ENCODE measurements at regions of chr2 and their contacts with region 1.

Region 1: GRCh38 chr2:99154643-99155536 is at the starts of genes LIPT1 and TSGA10:
- DNase-seq: peak; percentile 94 to 95
- ATAC-seq: peak; percentile 99 to 100 (median 100)
- H3K4me3 ChIP-seq: peak within 1 kb of the TSS; percentile 76
- H3K27ac ChIP-seq: peak within 1 kb of the TSS; percentile 92
- H3K4me1 ChIP-seq: peaks cover 15% of the 10 kb centered on the region
- H3K27me3 ChIP-seq: no peaks in the 10 kb centered on the region
- CTCF ChIP-seq: no peak
- total RNA-seq, gene LIPT1: 6.7 to 8.9 (median 7.7) TPM
- total RNA-seq, gene TSGA10: 1.5 to 3.7 (median 2.0) TPM

Region 2: DNA sequence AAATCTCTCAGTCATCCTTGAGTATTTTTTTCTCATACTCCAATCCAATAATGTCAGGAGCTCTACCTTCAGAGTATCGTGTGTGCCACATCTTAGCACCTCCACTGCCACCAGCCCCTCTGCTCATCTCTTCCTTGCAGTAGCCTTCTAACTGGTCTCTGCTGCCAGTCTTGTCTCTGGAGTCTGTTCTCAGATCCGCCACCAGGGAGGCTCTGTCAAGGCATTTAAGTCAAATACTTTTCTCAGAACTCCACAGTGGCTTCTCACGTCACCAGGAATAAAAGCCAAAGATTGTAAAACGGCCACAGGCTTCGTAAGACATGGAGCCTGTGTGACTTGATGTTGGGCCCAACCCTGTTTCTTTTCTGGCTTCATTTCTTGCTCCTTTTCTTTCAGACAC is 539.4 kb before region 1 on chr2:
- intact Hi-C with region 1: loop called in 1 of 2 experiments (anchors 10 kb)
- DNase-seq: no peak
- ATAC-seq: peak in 1 of 4 donors; percentile 46
- H3K4me3 ChIP-seq: no peak overlapping the region
- H3K27ac ChIP-seq: no peak overlapping the region
- H3K4me1 ChIP-seq: peaks cover 12% of the 10 kb centered on the region
- H3K27me3 ChIP-seq: no peaks in the 10 kb centered on the region
- CTCF ChIP-seq: no peak

Measured in psoas muscle (tissue), 8 donors.